MCF 10A (cell line): ENCODE measurements at regions of chr6 and their contacts with region 1.

Region 1: DNA sequence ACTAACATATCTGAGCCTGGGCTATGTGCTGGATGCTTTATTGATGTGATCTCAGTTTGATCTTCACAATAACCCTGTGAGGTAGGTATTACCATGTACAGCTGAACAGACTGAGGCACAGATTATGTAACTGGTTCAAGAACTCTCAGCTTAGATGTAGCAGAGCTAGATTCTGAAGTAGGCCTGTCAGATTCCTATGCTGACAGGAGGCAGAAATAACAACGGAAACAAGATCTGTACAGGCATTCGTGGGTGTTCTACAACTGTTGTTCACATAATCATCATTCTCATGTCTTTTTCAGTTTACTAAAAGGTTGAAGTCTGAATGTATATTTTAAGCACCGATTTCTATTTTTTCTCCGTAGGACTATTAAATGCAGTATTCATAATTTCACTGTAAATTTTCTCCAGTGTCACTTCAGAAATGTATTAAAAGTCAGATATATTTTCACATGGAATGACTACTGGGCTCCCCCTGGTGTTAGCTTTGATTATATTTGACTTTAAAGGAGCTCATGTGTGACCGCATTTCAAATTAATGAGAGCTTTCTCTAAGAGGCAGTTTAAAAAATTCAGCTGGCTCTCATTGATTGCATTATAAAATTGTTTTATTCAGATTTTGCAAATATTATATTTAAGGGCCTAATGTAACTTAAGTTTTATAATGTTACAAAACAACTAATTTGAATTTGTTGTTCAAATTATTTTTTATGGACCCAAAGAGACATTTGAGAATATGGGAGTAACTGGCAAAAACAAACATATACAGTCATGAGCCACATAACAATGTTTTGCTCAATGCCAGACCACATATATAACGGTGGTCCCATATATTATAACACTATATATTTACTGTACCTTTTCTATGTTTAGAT is 36.4 kb upstream of the SLC17A4 start:
- DNase-seq: peak; percentile 57
- H3K4me3 Mint-ChIP-seq: no peak overlapping the region
- H3K27ac Mint-ChIP-seq: no peak overlapping the region
- H3K4me1 Mint-ChIP-seq: peaks cover 6% of the 10 kb centered on the region
- H3K27me3 Mint-ChIP-seq: no peaks in the 10 kb centered on the region
- CTCF ChIP-seq: peak; percentile 62

Region 2: DNA sequence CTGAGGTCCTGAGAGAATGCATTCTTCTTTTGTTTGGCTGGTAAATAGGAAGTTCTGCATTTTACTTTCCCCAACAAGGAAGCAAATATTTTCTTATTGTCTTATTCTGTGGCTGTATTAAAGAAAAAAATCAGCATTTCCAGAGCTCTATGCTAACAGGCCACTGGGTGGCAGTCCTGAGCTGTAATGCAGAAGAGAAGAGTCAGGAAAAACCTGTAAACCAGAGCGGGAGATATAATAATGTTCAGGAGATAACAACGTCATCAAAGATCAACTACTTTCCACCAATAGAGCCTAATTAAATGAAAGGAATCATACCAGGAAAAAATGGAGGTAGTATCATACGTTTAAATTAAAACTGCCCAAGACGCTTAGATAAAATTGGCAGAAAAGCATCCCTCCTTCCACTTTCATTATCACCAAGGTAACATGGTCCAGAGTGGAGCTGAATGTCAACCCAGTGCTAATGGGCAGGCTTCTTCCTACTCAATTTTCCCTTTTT is 494.6 kb before region 1 on chr6:
- CTCF ChIA-PET with region 1: interaction called, 7 read pairs
- POLR2A ChIA-PET with region 1: interaction called, 3 read pairs
- intact Hi-C with region 1: loop called (anchors 1 kb)
- DNase-seq: peak; percentile 81
- H3K4me3 Mint-ChIP-seq: peak overlapping the region; percentile 13
- H3K27ac Mint-ChIP-seq: no peak overlapping the region
- H3K4me1 Mint-ChIP-seq: peaks cover 32% of the 10 kb centered on the region
- H3K27me3 Mint-ChIP-seq: no peaks in the 10 kb centered on the region
- CTCF ChIP-seq: peak; percentile 87

Region 3: GRCh38 chr6:25485821-25486534 is 232.1 kb before region 1 on chr6:
- CTCF ChIA-PET with region 1: no interaction called
- POLR2A ChIA-PET with region 1: no interaction called
- intact Hi-C with region 1: no loop called
- DNase-seq: no peak
- H3K4me3 Mint-ChIP-seq: no peak overlapping the region
- H3K27ac Mint-ChIP-seq: no peak overlapping the region
- H3K4me1 Mint-ChIP-seq: peaks cover 8% of the 10 kb centered on the region
- H3K27me3 Mint-ChIP-seq: no peaks in the 10 kb centered on the region
- CTCF ChIP-seq: no peak

Region 4: GRCh38 chr6:25601800-25602673 is 116.1 kb before region 1 on chr6:
- CTCF ChIA-PET with region 1: interaction called, 5 read pairs
- POLR2A ChIA-PET with region 1: no interaction called
- intact Hi-C with region 1: loop called (anchors 5 kb)
- DNase-seq: peak; percentile 58
- H3K4me3 Mint-ChIP-seq: no peak overlapping the region
- H3K27ac Mint-ChIP-seq: no peak overlapping the region
- H3K4me1 Mint-ChIP-seq: no peaks in the 10 kb centered on the region
- H3K27me3 Mint-ChIP-seq: no peaks in the 10 kb centered on the region
- CTCF ChIP-seq: peak; percentile 47

Region 5: GRCh38 chr6:25700761-25701160 is 17.3 kb before region 1 on chr6:
- CTCF ChIA-PET with region 1: interaction called, 25 read pairs
- POLR2A ChIA-PET with region 1: interaction called, 4 read pairs
- intact Hi-C with region 1: no loop called
- DNase-seq: no peak
- H3K4me3 Mint-ChIP-seq: no peak overlapping the region
- H3K27ac Mint-ChIP-seq: no peak overlapping the region
- H3K4me1 Mint-ChIP-seq: no peaks in the 10 kb centered on the region
- H3K27me3 Mint-ChIP-seq: peaks cover 6% of the 10 kb centered on the region
- CTCF ChIP-seq: no peak

Region 6: GRCh38 chr6:25732468-25733198 is 14.5 kb after region 1 on chr6:
- CTCF ChIA-PET with region 1: interaction called, 47 read pairs
- POLR2A ChIA-PET with region 1: no interaction called
- intact Hi-C with region 1: no loop called
- DNase-seq: no peak
- H3K4me3 Mint-ChIP-seq: no peak overlapping the region
- H3K27ac Mint-ChIP-seq: no peak overlapping the region
- H3K4me1 Mint-ChIP-seq: no peaks in the 10 kb centered on the region
- H3K27me3 Mint-ChIP-seq: peaks cover 50% of the 10 kb centered on the region
- CTCF ChIP-seq: no peak

Region 7: GRCh38 chr6:25788305-25788922 is 70.3 kb after region 1 on chr6:
- CTCF ChIA-PET with region 1: no interaction called
- POLR2A ChIA-PET with region 1: no interaction called
- intact Hi-C with region 1: no loop called
- DNase-seq: peak; percentile 77
- H3K4me3 Mint-ChIP-seq: no peak overlapping the region
- H3K27ac Mint-ChIP-seq: no peak overlapping the region
- H3K4me1 Mint-ChIP-seq: no peaks in the 10 kb centered on the region
- H3K27me3 Mint-ChIP-seq: no peaks in the 10 kb centered on the region
- CTCF ChIP-seq: peak; percentile 32

Region 8: GRCh38 chr6:25942561-25943147 is 224.6 kb after region 1 on chr6:
- CTCF ChIA-PET with region 1: interaction called, 5 read pairs
- POLR2A ChIA-PET with region 1: no interaction called
- intact Hi-C with region 1: loop called (anchors 1 kb)
- DNase-seq: peak; percentile 60
- H3K4me3 Mint-ChIP-seq: no peak overlapping the region
- H3K27ac Mint-ChIP-seq: no peak overlapping the region
- H3K4me1 Mint-ChIP-seq: no peaks in the 10 kb centered on the region
- H3K27me3 Mint-ChIP-seq: no peaks in the 10 kb centered on the region
- CTCF ChIP-seq: peak; percentile 43